ENCODE measurements at regions of chr11 and their contacts with region 1.

Region 1: GRCh38 chr11:108222686-108223448 is at the start of gene ATM:
- DNase-seq: peak; percentile 99
- H3K4me3 Mint-ChIP-seq: no peak within 1 kb of the TSS
- H3K27ac Mint-ChIP-seq: no peak within 1 kb of the TSS
- H3K4me1 Mint-ChIP-seq: peaks cover 46% of the 10 kb centered on the region
- H3K27me3 Mint-ChIP-seq: no peaks in the 10 kb centered on the region
- total RNA-seq, gene ATM: 34.1 and 34.7 TPM in 2 replicates

Region 2: GRCh38 chr11:107565219-107565937 is 657.5 kb before region 1 on chr11 and contains the start of gene ALKBH8:
- intact Hi-C with region 1: loop called (anchors 1 kb)
- DNase-seq: peak; percentile 69
- H3K4me3 Mint-ChIP-seq: peak within 1 kb of the TSS; percentile 88
- H3K27ac Mint-ChIP-seq: peak within 1 kb of the TSS; percentile 92
- H3K4me1 Mint-ChIP-seq: peaks cover 49% of the 10 kb centered on the region
- H3K27me3 Mint-ChIP-seq: no peaks in the 10 kb centered on the region
- total RNA-seq, gene ALKBH8: 10.6 and 11.9 TPM in 2 replicates

Region 3: DNA sequence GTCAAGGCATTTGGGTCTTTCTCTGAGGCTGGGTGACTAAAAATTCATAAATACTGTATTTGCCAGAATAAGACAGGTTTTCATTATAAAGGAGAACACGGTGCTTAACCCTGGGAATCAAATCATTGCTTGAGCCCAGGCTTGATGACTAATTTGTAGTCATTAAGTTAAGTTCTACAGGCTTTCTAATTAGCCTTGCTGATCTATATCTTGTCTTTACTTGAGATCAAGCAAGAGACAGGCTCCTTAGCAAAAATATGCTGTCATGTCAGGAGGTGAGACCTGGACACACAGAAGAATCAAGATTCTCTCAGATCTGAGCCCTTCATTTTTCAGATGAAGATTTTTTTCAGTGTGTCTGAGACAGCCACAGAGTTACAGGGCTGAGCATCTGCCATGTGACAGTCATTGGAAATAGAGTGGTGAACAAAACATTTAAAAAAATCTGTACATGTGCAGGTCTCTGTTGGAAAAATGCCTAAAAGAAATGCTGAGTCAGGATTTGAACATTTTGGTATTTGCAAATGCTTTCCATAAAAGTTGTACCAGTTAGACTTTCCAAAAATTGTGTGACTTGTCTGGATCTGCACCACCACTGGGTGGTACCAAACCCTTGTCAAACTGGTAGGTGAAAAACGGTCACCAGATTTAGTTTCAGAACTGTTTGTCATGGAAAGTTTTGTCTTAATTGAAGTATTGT is 86.9 kb before region 1 on chr11:
- intact Hi-C with region 1: loop called (anchors 1 kb)
- DNase-seq: no peak
- H3K4me3 Mint-ChIP-seq: no peak overlapping the region
- H3K27ac Mint-ChIP-seq: peak overlapping the region; percentile 79
- H3K4me1 Mint-ChIP-seq: peaks cover 20% of the 10 kb centered on the region
- H3K27me3 Mint-ChIP-seq: no peaks in the 10 kb centered on the region

Region 4: GRCh38 chr11:108302121-108302785 is 79.4 kb after region 1 on chr11:
- intact Hi-C with region 1: loop called (anchors 1 kb)
- DNase-seq: no peak
- H3K4me3 Mint-ChIP-seq: no peak overlapping the region
- H3K27ac Mint-ChIP-seq: no peak overlapping the region
- H3K4me1 Mint-ChIP-seq: peaks cover 9% of the 10 kb centered on the region
- H3K27me3 Mint-ChIP-seq: no peaks in the 10 kb centered on the region

Region 5: DNA sequence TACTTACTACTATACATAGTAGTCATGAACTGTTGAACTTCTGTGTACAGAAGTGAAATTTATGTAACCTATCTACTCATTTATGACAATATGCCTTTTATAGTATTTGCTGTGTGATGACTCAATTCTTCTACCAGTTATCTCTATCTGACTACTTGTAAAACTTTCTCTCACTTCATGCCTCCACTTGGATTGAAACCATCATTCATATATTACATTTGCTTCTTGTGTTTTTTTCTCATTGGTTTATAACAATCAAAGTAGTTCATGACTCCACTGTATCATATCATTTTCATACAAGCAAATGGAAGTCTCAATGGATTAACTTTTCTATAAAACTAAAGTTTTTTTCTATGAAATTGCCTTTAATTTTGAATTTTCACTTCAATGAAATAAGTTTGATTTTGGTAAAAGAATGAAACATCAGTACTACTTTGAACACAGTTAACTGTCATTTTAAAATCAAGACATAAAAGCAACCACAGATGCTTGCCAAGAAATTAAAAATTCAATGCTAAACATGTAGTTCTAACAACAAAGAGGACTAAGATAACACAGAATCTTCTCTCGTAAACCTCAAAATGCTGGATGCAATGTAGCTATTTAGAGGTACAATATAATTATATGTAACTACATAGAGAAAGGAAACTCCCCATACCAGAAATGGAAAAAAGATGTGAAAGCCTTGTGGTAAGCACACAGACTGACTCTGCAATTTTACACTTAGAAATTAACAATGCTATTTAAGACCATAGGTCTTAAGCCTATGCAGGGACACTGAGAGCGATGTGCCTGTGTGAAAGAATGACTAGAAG is 398.3 kb after region 1 on chr11:
- intact Hi-C with region 1: loop called (anchors 1 kb)
- DNase-seq: no peak
- H3K4me3 Mint-ChIP-seq: no peak overlapping the region
- H3K27ac Mint-ChIP-seq: no peak overlapping the region
- H3K4me1 Mint-ChIP-seq: peaks cover 32% of the 10 kb centered on the region
- H3K27me3 Mint-ChIP-seq: peaks cover 35% of the 10 kb centered on the region

Region 6: DNA sequence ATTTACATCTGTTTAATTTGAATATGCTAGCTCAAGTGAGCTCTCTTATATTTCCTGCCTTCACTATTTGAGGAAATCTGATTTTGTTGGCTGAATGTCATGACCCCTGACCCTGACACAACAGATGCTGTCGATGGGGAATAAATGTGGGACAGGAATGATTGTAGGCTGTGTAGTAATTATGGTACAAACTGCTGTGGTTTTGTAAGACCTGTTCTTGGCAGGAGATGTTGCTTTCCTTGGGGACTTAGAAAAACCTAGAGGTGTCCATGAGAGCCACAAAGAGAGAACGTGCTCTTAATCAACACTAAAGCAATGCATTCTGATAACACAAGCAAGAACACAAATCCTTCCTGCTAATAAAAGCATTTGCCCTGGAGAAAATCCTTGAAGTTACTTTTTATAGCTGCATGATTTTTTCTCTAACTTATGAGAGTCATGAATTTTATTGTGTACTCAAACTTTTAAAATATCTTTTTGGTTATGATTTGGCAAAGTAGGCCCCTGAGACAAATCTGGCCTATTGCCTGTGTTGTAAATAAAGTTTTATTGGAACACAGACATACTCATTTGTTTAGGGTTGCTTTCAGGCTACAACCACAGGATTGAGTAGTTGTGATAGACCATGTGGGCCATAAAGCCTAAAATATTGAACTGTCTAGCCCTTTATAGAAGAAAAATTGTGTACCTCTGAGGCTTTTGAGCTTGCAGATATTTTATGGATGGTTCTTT is 532.2 kb after region 1 on chr11:
- intact Hi-C with region 1: loop called (anchors 5 kb)
- DNase-seq: no peak
- H3K4me3 Mint-ChIP-seq: no peak overlapping the region
- H3K27ac Mint-ChIP-seq: no peak overlapping the region
- H3K4me1 Mint-ChIP-seq: peaks cover 27% of the 10 kb centered on the region
- H3K27me3 Mint-ChIP-seq: no peaks in the 10 kb centered on the region

Measured in activated T-helper 2 cell treated with anti-CD3 and anti-CD28 coated beads, Interferon-gamma antibody, Interleukin-2, Interleukin-4, amounts not matched to agents 10 μg/mL and 5 μg/mL and 100 μg/mL, durations not matched to agents 14 hours and 24 hours and 36 hours (primary cell).